Heart left ventricle (tissue), 16 donors: ENCODE measurements at regions of chr15 and their contacts with region 1.

Region 1: GRCh38 chr15:58182460-58183163 is 44.4 kb downstream of the AQP9 start:
- DNase-seq: peak; percentile 27 to 72 (median 40)
- ATAC-seq: peak; percentile 26 to 93 (median 90)
- H3K4me3 ChIP-seq: no peak overlapping the region
- H3K27ac ChIP-seq: no peak overlapping the region
- H3K4me1 ChIP-seq: peaks cover 0 to 3% (median 0%) of the 10 kb centered on the region in 12 donors
- H3K27me3 ChIP-seq: peaks cover 0 to 8% (median 0%) of the 10 kb centered on the region in 9 donors
- CTCF ChIP-seq: peak; percentile 57 to 84 (median 76)
- POLR2A ChIP-seq: no peak

Region 2: DNA sequence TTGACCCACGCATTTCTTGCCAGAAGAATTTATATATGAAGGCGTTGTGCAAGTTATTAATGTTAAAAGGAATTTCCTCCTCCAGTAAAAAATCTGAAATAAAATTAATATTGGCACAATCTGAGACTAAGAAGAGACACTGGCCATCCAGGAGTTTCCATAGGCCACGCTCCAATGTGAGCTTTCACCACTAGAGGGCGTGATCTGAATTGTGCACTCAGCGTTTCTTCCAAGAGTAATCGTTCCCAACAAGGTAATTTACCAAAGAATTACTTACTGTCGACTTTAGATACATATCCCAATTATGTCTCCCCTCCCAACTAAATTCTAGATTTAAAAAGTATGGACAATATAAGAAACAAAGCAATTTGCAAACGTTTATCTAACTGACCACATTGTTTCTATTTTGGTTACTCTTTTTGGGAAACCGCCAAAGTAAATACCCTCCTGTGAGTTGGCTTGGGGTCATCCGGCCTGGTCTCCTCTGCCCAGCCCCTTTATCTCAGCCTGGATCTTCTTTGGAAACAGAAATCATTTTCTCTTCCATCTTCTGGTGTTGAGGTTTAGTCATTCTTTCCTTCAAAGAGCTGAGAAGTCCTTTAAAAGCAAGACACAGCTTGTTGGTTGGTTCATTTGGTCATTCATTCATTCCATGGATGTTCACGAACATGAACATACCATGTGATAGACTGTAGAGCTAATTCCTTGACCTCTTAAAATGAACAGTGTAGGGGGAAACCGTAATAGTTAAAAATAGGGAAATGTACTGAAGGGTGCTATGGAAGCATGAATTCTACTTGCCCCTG is 449.9 kb before region 1 on chr15:
- intact Hi-C with region 1: loop called in 2 of 10 experiments (anchors 10 kb)
- DNase-seq: peak in 3 of 5 donors; percentile 35 to 52 (median 37)
- ATAC-seq: peak in 2 of 4 donors; percentile 58 to 69
- H3K4me3 ChIP-seq: no peak overlapping the region
- H3K27ac ChIP-seq: no peak overlapping the region
- H3K4me1 ChIP-seq: peaks cover 0 to 10% (median 4%) of the 10 kb centered on the region in 12 donors
- H3K27me3 ChIP-seq: no peaks in the 10 kb centered on the region
- CTCF ChIP-seq: peak; percentile 80 to 93 (median 88)
- POLR2A ChIP-seq: no peak

Region 3: DNA sequence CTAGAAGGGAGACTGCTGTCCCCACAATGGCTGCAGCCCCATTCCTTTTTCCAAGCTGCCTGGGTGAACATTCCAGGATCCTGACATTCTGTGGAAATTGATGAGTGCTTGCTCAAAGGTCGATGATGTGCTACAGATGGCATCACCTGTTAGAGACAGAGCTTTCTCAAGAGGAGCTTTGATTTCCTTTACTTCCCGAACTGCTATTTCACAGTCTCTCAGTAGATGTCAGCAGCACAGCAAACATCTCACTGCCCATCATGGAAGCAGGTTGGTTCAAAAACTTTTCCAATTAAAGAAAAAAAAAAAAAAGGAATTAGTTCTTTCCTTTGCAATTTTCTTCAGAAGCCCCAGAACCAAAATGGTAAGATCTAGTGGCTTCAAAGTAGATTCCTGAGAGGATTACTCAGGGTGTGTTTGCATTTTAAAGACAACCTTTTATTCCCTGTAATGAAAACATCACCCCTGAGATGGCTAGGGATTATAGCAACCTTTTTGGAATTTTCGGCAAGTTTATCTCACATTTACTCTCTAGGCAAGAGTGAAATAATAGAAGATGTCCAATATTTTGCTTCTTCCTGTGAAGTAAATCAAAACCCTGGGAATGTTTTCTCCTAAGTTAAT is 431.3 kb before region 1 on chr15:
- intact Hi-C with region 1: loop called in 6 of 10 experiments (anchors 5 to 10 kb)
- DNase-seq: no peak
- ATAC-seq: peak in 3 of 4 donors; percentile 47 to 64 (median 58)
- H3K4me3 ChIP-seq: no peak overlapping the region
- H3K27ac ChIP-seq: no peak overlapping the region
- H3K4me1 ChIP-seq: peaks cover 0 to 15% (median 0%) of the 10 kb centered on the region in 12 donors
- H3K27me3 ChIP-seq: no peaks in the 10 kb centered on the region
- CTCF ChIP-seq: peak; percentile 18 to 75 (median 62)
- POLR2A ChIP-seq: no peak

Region 4: DNA sequence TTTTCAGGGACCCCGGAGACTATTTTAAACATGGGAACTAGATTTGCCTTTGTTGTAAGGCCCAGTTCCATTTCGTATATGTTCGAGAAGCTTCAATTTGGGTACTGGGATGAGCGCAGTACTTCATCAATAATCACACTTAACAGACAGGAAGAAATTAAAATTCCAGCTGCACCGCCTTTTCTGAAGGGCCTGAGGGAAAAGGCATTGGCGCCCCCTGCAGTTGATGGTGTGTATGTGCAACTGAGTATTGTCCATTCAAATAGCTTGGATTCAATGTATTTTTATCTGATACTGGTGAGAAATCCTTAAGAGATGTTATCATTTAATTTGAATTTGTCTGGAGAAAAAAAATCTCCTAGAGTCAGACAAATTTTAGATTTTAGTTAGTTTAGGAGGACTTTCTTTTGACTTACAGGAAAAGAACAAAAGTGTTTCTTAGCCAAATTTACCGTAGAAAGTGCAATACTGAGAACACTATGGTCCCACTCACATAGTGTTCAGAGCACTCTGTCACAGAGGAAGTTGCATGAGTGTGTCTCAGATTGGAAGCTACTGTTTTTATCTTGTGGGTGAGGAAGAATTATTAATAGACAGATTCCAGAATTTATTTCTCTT is 111.7 kb before region 1 on chr15:
- intact Hi-C with region 1: loop called in 7 of 10 experiments (anchors 2 to 10 kb)
- DNase-seq: peak; percentile 44 to 77 (median 53)
- ATAC-seq: peak in 1 of 4 donors; percentile 44
- H3K4me3 ChIP-seq: no peak overlapping the region
- H3K27ac ChIP-seq: no peak overlapping the region
- H3K4me1 ChIP-seq: peaks cover 0 to 7% (median under 1%) of the 10 kb centered on the region in 12 donors
- H3K27me3 ChIP-seq: peaks cover 0 to 35% (median 3%) of the 10 kb centered on the region in 9 donors
- CTCF ChIP-seq: peak; percentile 88 to 98 (median 94)
- POLR2A ChIP-seq: no peak

Region 5: GRCh38 chr15:58115692-58116091 is 66.9 kb before region 1 on chr15:
- intact Hi-C with region 1: loop called in 7 of 10 experiments (anchors 2 to 5 kb)
- DNase-seq: no peak
- ATAC-seq: no peak
- H3K4me3 ChIP-seq: no peak overlapping the region
- H3K27ac ChIP-seq: no peak overlapping the region
- H3K4me1 ChIP-seq: no peaks in the 10 kb centered on the region
- H3K27me3 ChIP-seq: peaks cover 0 to 7% (median 0%) of the 10 kb centered on the region in 9 donors
- CTCF ChIP-seq: peak in 9 of 12 donors; percentile 6 to 37 (median 18)
- POLR2A ChIP-seq: no peak

Region 6: DNA sequence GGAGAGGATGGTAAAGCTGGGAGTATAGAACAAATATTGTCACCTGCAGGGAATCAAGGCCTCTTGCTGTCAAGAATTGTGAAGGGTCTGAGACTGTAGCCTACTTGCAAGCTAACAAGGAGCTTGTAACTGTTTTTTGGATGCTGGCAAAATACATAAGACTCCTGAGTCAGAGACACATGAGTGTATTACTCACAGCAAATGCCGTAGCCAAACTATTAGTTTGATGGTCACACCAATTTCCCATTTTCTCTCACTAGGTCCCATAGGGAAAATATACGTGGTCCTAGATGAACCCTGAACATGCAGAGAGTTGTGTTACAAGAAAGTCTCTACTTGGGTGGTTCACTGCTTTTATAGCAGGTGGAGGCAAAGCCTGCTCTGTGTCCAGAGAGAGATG is 204.5 kb after region 1 on chr15:
- intact Hi-C with region 1: no loop called
- DNase-seq: no peak
- ATAC-seq: no peak
- H3K4me3 ChIP-seq: no peak overlapping the region
- H3K27ac ChIP-seq: no peak overlapping the region
- H3K4me1 ChIP-seq: no peaks in the 10 kb centered on the region
- H3K27me3 ChIP-seq: no peaks in the 10 kb centered on the region
- CTCF ChIP-seq: no peak
- POLR2A ChIP-seq: no peak